CD4-positive, alpha-beta memory T cell (primary cell): ENCODE measurements at regions of chr14 and their contacts with region 1.

Region 1: GRCh38 chr14:34678306-34678705 is 36.1 kb downstream of the CFL2 start:
- DNase-seq: no peak
- H3K4me3 ChIP-seq: no peak overlapping the region
- H3K4me3 Mint-ChIP-seq: no peak overlapping the region
- H3K27ac ChIP-seq: no peak overlapping the region
- H3K27ac Mint-ChIP-seq: peak overlapping the region in 1 of 7 donors; percentile 62
- H3K4me1 ChIP-seq: peaks cover 6% of the 10 kb centered on the region
- H3K4me1 Mint-ChIP-seq: peaks cover 0 to 3% (median 0%) of the 10 kb centered on the region in 4 donors
- H3K27me3 ChIP-seq: no peaks in the 10 kb centered on the region
- H3K27me3 Mint-ChIP-seq: no peaks in the 10 kb centered on the region

Region 2: DNA sequence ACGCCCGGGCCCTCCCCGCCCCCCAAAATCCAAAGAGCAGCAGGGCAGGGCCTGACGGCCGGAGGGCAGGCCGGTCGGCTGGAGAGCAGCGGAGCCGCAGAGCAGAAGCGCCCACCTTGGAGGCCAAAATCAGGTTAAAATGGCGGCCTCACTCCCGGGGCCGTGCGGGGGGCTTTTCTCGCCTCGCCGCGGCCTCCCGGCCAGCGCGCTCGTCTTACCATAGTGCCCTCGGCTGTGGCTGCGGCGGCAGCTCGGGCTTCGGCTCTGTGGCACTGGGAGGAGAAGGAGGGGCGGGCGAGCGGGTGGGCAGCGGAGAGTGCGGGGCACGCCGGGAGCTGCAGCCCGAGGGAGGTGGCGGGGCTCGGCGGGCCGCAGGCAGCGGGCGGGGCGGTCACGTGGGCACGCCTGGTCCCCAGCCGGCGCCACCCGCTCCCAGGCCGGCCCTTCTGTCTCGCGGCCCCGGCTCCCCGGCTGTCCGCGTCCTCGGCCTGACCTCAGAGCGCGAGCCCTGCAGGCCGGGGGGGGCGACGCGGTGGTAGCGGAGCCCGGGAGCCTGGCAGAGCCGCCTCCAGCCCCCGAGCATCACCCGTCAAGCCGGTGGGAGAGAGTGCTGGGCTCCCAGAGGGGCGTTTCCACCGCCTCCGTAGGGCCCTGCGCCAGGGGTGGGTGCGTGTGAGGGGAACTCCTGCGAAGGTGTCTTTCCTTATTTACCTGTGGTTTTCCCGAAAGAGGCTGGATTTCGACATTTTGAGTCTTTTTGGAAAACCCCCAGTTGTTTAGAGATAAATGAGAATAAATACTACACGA is 36.2 kb after region 1 on chr14 and contains the start of gene CFL2:
- CTCF ChIA-PET with region 1: interaction called, 27 read pairs
- POLR2A ChIA-PET with region 1: interaction called, 3 read pairs
- intact Hi-C with region 1: no loop called
- DNase-seq: peak; percentile 66 to 90 (median 74)
- H3K4me3 ChIP-seq: peak within 1 kb of the TSS; percentile 25 to 65
- H3K4me3 Mint-ChIP-seq: peak within 1 kb of the TSS; percentile 88 to 95 (median 93)
- H3K27ac ChIP-seq: peak within 1 kb of the TSS; percentile 83
- H3K27ac Mint-ChIP-seq: peak within 1 kb of the TSS; percentile 92 to 96 (median 94)
- H3K4me1 ChIP-seq: peaks cover 28% of the 10 kb centered on the region
- H3K4me1 Mint-ChIP-seq: peaks cover 15 to 27% (median 19%) of the 10 kb centered on the region in 4 donors
- H3K27me3 ChIP-seq: no peaks in the 10 kb centered on the region
- H3K27me3 Mint-ChIP-seq: no peaks in the 10 kb centered on the region
- total RNA-seq, gene CFL2: 12.3 to 12.6 TPM

Region 3: DNA sequence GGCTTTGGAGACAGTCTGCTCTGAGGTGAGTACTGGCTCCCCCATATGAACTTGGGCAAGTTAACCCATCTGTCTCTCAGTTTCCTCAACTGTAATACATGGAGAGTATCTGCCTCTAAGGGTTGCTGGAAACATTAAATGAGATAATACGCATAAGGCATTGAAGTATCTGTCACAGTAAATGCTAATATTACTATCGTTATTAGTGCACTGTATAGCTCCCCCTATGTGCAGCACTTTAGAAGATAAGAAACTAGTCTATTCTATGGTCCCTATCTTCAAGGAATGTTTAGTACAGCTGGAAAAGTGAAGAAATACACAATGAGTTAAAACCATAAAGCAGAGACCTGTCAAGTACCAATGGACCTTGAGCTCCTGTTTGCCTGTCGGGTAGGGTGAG is 87.8 kb after region 1 on chr14:
- CTCF ChIA-PET with region 1: interaction called, 11 read pairs
- POLR2A ChIA-PET with region 1: no interaction called
- intact Hi-C with region 1: no loop called
- DNase-seq: no peak
- H3K4me3 ChIP-seq: no peak overlapping the region
- H3K4me3 Mint-ChIP-seq: no peak overlapping the region
- H3K27ac ChIP-seq: no peak overlapping the region
- H3K27ac Mint-ChIP-seq: peak overlapping the region in 5 of 7 donors; percentile 8 to 84 (median 68)
- H3K4me1 ChIP-seq: no peaks in the 10 kb centered on the region
- H3K4me1 Mint-ChIP-seq: peaks cover 0 to 8% (median 6%) of the 10 kb centered on the region in 4 donors
- H3K27me3 ChIP-seq: no peaks in the 10 kb centered on the region
- H3K27me3 Mint-ChIP-seq: no peaks in the 10 kb centered on the region

Region 4: DNA sequence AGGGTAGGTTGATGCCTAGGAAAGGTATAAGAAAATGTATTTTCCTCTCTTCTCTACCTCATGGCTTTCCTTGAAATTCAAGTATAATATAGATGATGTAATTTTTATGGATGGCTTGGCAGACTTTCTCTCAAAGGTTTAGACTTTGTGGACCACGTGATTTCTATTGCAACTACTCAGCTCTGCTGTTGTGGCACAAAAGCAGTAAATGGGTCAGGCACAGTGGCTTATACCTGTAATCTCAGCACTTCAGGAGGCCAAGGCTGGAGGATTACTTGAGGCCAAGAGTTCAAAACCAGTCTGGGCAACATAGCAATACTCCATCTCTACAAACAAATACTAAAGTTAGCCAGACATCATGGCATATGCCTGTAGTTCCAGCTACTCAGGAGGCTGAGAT is 326.5 kb after region 1 on chr14:
- CTCF ChIA-PET with region 1: no interaction called
- POLR2A ChIA-PET with region 1: no interaction called
- intact Hi-C with region 1: loop called (anchors 10 kb)
- DNase-seq: no peak
- H3K4me3 ChIP-seq: no peak overlapping the region
- H3K4me3 Mint-ChIP-seq: no peak overlapping the region
- H3K27ac ChIP-seq: no peak overlapping the region
- H3K27ac Mint-ChIP-seq: peak overlapping the region in 1 of 7 donors; percentile 47
- H3K4me1 ChIP-seq: no peaks in the 10 kb centered on the region
- H3K4me1 Mint-ChIP-seq: no peaks in the 10 kb centered on the region
- H3K27me3 ChIP-seq: no peaks in the 10 kb centered on the region
- H3K27me3 Mint-ChIP-seq: no peaks in the 10 kb centered on the region